Common myeloid progenitor, CD34-positive (primary cell): ENCODE measurements at regions of chr1 and their contacts with region 1.

Region 1: GRCh38 chr1:151156515-151156819 is at the start of gene TNFAIP8L2:
- DNase-seq: peak; percentile 64 to 78 (median 74)
- H3K4me3 ChIP-seq: peak within 1 kb of the TSS; percentile 45 to 86 (median 79)
- H3K27ac ChIP-seq: peak within 1 kb of the TSS; percentile 51 to 76
- H3K4me1 ChIP-seq: peaks cover 24 to 63% (median 55%) of the 10 kb centered on the region in 4 experiments
- H3K27me3 ChIP-seq: no peaks in the 10 kb centered on the region

Region 2: DNA sequence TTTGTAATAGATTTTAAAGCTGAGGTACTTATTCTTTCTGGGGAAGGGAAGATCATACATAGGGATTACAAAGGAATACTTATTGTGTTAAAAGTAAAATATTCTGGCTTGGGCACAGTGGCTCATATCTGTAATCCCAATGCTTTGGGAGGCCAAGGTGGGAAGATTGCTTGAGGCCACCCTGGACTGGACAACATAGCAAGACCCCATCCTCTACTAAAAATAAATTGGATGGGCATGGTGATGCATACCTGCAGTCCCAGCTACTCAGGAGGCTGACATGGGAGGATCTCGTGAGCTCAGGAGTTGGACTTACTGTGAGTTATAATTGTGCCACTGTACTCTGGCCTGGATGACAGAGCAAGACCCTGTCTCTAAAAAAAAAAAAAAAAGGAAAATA is 58.3 kb before region 1 on chr1:
- CTCF ChIA-PET with region 1: interaction called, 135 read pairs
- POLR2A ChIA-PET with region 1: interaction called, 7 read pairs
- DNase-seq: no peak
- H3K4me3 ChIP-seq: no peak overlapping the region
- H3K27ac ChIP-seq: no peak overlapping the region
- H3K4me1 ChIP-seq: no peaks in the 10 kb centered on the region
- H3K27me3 ChIP-seq: no peaks in the 10 kb centered on the region

Region 3: DNA sequence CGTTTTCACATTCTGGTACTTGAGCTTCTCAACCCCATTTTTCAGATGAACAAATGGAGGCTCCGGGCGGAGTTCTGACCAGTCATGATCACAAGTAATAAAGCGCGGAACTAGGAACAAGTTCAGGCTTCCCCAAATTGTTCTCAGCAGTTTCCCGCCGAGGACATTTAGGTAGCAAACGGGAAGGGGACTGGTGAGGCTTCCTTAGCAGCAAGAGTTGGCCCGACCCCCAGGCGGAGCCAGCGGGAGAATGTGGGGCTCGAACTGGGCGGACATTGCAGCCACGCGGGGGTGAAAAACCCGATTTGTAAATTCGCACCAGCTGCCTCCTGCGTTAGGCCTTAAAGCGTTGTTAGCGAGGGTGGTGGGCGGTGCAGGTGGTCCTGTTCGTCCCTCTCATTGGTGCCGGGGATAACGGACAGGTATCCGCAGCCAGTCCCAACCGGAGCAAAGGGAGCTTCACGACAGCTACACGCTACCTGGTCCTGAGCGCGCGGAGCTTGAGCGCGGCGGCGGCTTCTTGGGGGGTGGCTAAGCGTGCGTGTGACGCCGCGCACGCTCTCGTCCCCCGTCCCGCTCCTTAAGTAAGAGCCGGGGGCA is 25.4 kb before region 1 on chr1:
- CTCF ChIA-PET with region 1: interaction called, 33 read pairs
- POLR2A ChIA-PET with region 1: interaction called, 3 read pairs
- DNase-seq: peak; percentile 95 to 98 (median 97)
- H3K4me3 ChIP-seq: peak overlapping the region in 6 of 7 experiments; percentile 5 to 74 (median 50)
- H3K27ac ChIP-seq: peak overlapping the region in 1 of 2 experiments; percentile 26
- H3K4me1 ChIP-seq: peaks cover 0 to 9% (median 5%) of the 10 kb centered on the region in 4 experiments
- H3K27me3 ChIP-seq: peaks cover 0 to 4% (median 0%) of the 10 kb centered on the region in 5 experiments

Region 4: DNA sequence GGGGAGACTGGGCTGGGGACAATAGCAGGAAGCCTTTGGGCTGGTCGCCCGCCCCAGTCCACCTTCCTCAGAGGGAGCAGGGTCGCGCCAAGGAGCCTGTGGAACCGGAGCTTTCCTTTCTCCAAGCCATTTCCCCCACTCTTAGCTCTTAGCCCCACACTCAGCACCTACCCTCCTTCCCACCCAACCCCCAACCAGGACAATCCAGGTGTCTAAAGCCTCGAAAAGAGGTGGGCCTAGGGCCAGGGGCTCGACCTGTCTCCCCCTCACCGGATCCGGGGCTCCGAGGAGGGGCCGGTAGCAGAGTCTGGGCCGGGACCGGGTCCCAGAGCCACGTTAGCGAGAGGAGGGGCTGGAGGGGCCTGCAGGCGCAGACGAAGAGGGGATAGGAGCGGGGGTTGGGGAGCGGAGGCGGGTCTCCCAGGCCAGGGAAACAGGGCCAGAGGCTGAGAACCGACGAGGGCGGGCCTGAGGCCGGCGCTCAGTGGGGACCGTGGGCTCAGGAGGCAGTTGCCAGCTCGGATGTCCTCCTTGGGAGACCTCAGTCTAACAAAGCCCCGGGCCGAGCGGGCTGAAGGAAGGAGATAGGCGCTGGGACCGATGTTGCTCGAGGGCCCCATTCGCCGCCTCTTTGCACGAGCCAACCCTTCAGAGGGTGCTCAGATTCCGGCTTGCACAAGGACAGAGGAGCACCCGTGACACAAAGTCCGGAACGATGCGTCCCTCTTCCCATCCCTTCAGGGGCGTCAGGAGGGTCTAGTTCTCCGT is 11.0 kb before region 1 on chr1:
- CTCF ChIA-PET with region 1: interaction called, 24 read pairs
- POLR2A ChIA-PET with region 1: interaction called, 4 read pairs
- DNase-seq: peak in 1 of 3 donors; percentile 33
- H3K4me3 ChIP-seq: peak overlapping the region; percentile 59 to 89 (median 80)
- H3K27ac ChIP-seq: no peak overlapping the region
- H3K4me1 ChIP-seq: peaks cover 0 to 36% (median 25%) of the 10 kb centered on the region in 4 experiments
- H3K27me3 ChIP-seq: peaks cover 0 to 13% (median 0%) of the 10 kb centered on the region in 5 experiments

Region 5: DNA sequence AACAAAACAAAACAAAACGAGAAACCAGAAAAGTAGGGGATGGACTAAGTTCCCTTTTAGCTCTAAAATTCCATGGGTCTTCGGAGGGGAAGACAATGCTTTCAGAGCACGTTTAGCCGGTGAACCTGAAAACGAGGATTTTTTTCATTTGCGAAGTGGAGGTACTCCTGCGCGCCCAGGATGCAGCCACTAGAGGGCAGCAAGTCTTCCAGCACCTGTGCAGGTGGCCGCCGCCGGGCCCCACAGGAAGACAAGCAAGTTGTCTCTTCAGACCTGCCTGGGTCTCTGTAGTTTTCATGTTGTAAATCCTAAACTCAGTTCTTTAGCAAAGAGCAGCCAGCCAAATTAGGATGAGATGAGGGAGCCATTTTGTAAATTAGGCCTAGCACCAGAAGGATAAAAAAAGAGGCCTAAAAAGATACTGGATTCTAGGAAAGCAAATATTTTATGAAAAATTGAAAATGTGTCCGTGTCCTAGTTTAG is 437.7 kb after region 1 on chr1:
- CTCF ChIA-PET with region 1: no interaction called
- POLR2A ChIA-PET with region 1: no interaction called
- DNase-seq: peak; percentile 79 to 82 (median 81)
- H3K4me3 ChIP-seq: peak overlapping the region in 5 of 7 experiments; percentile 49 to 71 (median 68)
- H3K27ac ChIP-seq: no peak overlapping the region
- H3K4me1 ChIP-seq: peaks cover 0 to 10% (median 5%) of the 10 kb centered on the region in 4 experiments
- H3K27me3 ChIP-seq: no peaks in the 10 kb centered on the region